ENCODE measurements at regions of chr2 and their contacts with region 1.

Region 1: DNA sequence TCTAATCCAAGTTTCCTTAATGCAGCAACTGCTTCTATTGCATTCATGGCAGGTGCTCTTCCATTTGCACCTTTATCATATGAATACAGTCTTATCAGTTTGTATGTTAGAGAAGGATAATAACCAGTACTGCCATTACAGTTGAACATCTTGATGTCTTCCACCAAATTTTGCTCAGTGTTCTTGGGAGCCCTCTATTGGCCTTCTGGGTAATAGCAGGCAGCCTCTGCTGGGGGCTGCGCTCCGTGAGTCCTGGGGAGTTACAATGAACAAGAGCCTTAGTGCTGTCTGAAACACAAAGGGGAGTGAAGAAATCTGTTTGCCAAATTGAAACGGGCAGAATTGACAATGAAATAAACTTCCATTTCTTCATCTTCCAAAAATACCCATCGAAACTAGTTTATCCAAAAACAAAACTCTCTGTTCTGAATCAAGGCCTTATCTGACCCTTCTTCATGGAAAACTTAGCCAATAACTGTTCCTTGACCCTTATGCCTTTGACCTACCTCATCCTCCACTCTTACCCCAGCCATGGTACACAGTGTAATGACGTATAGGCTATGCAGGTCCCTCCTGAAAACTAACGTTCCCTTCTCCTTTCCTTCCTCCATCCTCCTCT is 79.9 kb downstream of the ALK start:
- DNase-seq: peak in 1 of 2 donors; percentile 51
- H3K4me3 ChIP-seq: no peak overlapping the region
- H3K27ac ChIP-seq: no peak overlapping the region
- H3K4me1 ChIP-seq: peaks cover 0 to 5% (median 0%) of the 10 kb centered on the region in 4 donors
- H3K27me3 ChIP-seq: peaks cover 0 to 16% (median 0%) of the 10 kb centered on the region in 3 donors
- CTCF ChIP-seq: peak in 5 of 7 experiments; percentile 56 to 91 (median 80)
- EP300 ChIP-seq: no peak
- POLR2A ChIP-seq: no peak

Region 2: GRCh38 chr2:29295857-29296256 is 545.6 kb before region 1 on chr2:
- intact Hi-C with region 1: loop called (anchors 10 kb)
- DNase-seq: peak in 1 of 2 donors; percentile 30
- H3K4me3 ChIP-seq: no peak overlapping the region
- H3K27ac ChIP-seq: no peak overlapping the region
- H3K4me1 ChIP-seq: no peaks in the 10 kb centered on the region
- H3K27me3 ChIP-seq: peaks cover 0 to 13% (median 0%) of the 10 kb centered on the region in 3 donors
- CTCF ChIP-seq: peak in 1 of 7 experiments; percentile 23
- EP300 ChIP-seq: no peak
- POLR2A ChIP-seq: no peak